BJ (cell line): ENCODE measurements at regions of chr17 and their contacts with region 1.

Region 1: GRCh38 chr17:39730095-39730921 is at the start of gene MIEN1:
- DNase-seq: no peak
- H3K4me3 ChIP-seq: peak within 1 kb of the TSS; percentile 89
- H3K27me3 ChIP-seq: peaks cover 1% of the 10 kb centered on the region; the same call in 1 of the 2 replicates
- CTCF ChIP-seq: peak; percentile 84
- polyA plus RNA-seq, gene MIEN1: 61.4 and 78.9 TPM in 2 replicates

Region 2: GRCh38 chr17:39754161-39754951 is 24.0 kb after region 1 on chr17:
- CTCF ChIA-PET with region 1: interaction called, 10 read pairs
- POLR2A ChIA-PET with region 1: no interaction called
- DNase-seq: no peak
- H3K4me3 ChIP-seq: peak overlapping the region; percentile 59
- H3K27me3 ChIP-seq: peaks cover 3% of the 10 kb centered on the region
- CTCF ChIP-seq: peak; percentile 65

Region 3: GRCh38 chr17:39800540-39800939 is 70.2 kb after region 1 on chr17:
- CTCF ChIA-PET with region 1: no interaction called
- POLR2A ChIA-PET with region 1: no interaction called
- DNase-seq: no peak
- H3K4me3 ChIP-seq: no peak overlapping the region
- H3K27me3 ChIP-seq: peaks cover 2% of the 10 kb centered on the region; the same call in 1 of the 2 replicates
- CTCF ChIP-seq: no peak